PC-9 (cell line): ENCODE measurements at regions of chr6 and their contacts with region 1.

Region 1: GRCh38 chr6:28383235-28384142 is 16.1 kb downstream of the ZSCAN12 start:
- DNase-seq: peak; percentile 74 to 92
- H3K4me3 ChIP-seq: peak overlapping the region; percentile 64
- H3K27ac ChIP-seq: no peak overlapping the region
- H3K4me1 ChIP-seq: peaks cover 8% of the 10 kb centered on the region; the same call in 1 of the 2 replicates
- H3K27me3 ChIP-seq: no peaks in the 10 kb centered on the region
- CTCF ChIP-seq: peak; percentile 68

Region 2: GRCh38 chr6:28252009-28252975 is 131.2 kb before region 1 on chr6 and contains the start of gene ZKSCAN4:
- CTCF ChIA-PET with region 1: interaction called, 3 read pairs
- POLR2A ChIA-PET with region 1: interaction called, 3 read pairs
- intact Hi-C with region 1: loop called (anchors 2 kb)
- DNase-seq: peak; percentile 73 to 76
- H3K4me3 ChIP-seq: peak within 1 kb of the TSS; percentile 99
- H3K27ac ChIP-seq: no peak within 1 kb of the TSS
- H3K4me1 ChIP-seq: peaks cover 19% of the 10 kb centered on the region
- H3K27me3 ChIP-seq: no peaks in the 10 kb centered on the region
- CTCF ChIP-seq: no peak
- total RNA-seq, gene ZKSCAN4: 6.0 and 6.7 TPM in 2 replicates

Region 3: GRCh38 chr6:29649701-29650673 is 1266.5 kb after region 1 on chr6:
- CTCF ChIA-PET with region 1: no interaction called
- POLR2A ChIA-PET with region 1: no interaction called
- intact Hi-C with region 1: no loop called
- DNase-seq: peak; percentile 94 to 97
- H3K4me3 ChIP-seq: peak overlapping the region; percentile 81
- H3K27ac ChIP-seq: peak overlapping the region; percentile 66
- H3K4me1 ChIP-seq: peaks cover 3% of the 10 kb centered on the region; the same call in 1 of the 2 replicates
- H3K27me3 ChIP-seq: no peaks in the 10 kb centered on the region
- CTCF ChIP-seq: peak; percentile 89